T-cell (primary cell): ENCODE measurements at regions of chr10 and their contacts with region 1.

Region 1: DNA sequence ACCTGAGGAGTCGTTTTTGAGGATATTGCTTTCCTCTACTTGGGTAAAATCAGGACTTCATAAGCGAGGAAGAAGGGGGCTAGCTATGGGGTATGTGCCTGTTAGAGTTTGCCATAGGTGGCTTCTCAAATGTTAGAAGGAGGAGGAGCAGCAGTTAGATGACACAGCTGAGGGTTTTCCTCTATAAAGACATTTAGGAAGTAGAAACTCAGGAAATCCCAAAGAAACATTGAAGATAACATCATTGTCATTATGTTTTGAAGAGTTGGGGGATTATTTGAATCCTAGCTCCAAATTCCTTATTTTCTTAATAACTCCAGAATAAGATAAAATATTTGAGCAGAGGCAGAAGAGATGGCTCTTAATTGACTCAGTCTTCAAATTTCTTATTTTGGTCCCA is 58.9 kb upstream of the CC2D2B start:
- DNase-seq: no peak
- ATAC-seq: no peak
- H3K4me3 ChIP-seq: no peak overlapping the region
- H3K4me3 Mint-ChIP-seq: no peak overlapping the region
- H3K27ac ChIP-seq: no peak overlapping the region
- H3K27ac Mint-ChIP-seq: no peak overlapping the region
- H3K4me1 ChIP-seq: no peaks in the 10 kb centered on the region
- H3K4me1 Mint-ChIP-seq: no peaks in the 10 kb centered on the region
- H3K27me3 ChIP-seq: no peaks in the 10 kb centered on the region
- H3K27me3 Mint-ChIP-seq: no peaks in the 10 kb centered on the region

Region 2: DNA sequence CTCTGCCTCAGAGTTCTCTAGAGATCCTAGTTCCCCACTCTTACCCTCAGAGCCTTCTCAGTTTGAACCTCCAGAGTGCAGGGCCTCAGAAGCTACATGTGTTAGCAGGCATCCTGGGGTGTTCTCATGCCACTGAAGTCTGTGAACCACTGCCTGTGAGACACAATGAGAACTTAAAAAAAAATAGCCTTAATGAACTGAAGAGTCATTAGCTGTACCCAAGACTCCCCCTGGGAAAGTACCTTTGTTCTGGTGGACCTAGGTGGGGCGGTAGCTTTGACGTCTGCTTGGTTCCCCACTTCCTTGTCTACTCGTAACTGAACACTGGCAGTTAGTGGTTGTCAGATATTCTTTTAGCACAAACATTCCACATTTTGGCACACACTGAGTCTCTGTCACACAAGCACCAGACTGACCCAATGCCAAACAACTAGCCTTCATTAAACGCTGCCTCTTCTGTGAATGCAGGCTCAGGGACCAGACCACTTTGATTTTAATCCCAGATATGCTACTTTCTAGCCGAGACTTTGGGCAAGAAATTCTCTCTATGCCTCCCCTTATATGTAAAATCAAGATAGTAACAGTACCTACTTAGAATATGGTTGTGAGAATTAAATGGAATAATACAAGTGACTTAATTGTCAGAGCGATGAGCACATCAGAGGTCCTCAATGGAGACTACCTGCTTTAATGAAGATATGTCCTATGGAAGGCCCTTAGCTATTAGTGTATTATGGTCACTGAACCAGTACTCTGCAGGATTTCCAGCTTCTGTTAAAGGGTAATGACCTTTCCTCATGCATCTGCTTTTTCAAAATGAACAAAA is 16.4 kb before region 1 on chr10:
- CTCF ChIA-PET with region 1: no interaction called
- POLR2A ChIA-PET with region 1: no interaction called
- DNase-seq: peak in 34 of 35 experiments; percentile 5 to 85 (median 43)
- ATAC-seq: peak; percentile 27 to 95 (median 72)
- H3K4me3 ChIP-seq: no peak overlapping the region
- H3K4me3 Mint-ChIP-seq: peak overlapping the region in 1 of 3 donors; percentile 19
- H3K27ac ChIP-seq: peak overlapping the region; percentile 51
- H3K27ac Mint-ChIP-seq: peak overlapping the region; percentile 76 to 87
- H3K4me1 ChIP-seq: peaks cover 0 to 28% of the 10 kb centered on the region in 2 experiments
- H3K4me1 Mint-ChIP-seq: peaks cover 14 to 32% (median 15%) of the 10 kb centered on the region in 3 donors
- H3K27me3 ChIP-seq: no peaks in the 10 kb centered on the region
- H3K27me3 Mint-ChIP-seq: no peaks in the 10 kb centered on the region

Region 3: GRCh38 chr10:97659589-97659988 is 1810.7 kb after region 1 on chr10:
- CTCF ChIA-PET with region 1: no interaction called
- POLR2A ChIA-PET with region 1: interaction called in 1 of 2 experiments, 10 read pairs
- DNase-seq: no peak
- ATAC-seq: no peak
- H3K4me3 ChIP-seq: no peak overlapping the region
- H3K4me3 Mint-ChIP-seq: no peak overlapping the region
- H3K27ac ChIP-seq: no peak overlapping the region
- H3K27ac Mint-ChIP-seq: no peak overlapping the region
- H3K4me1 ChIP-seq: no peaks in the 10 kb centered on the region
- H3K4me1 Mint-ChIP-seq: peaks cover 0 to 3% (median 0%) of the 10 kb centered on the region in 3 donors
- H3K27me3 ChIP-seq: no peaks in the 10 kb centered on the region
- H3K27me3 Mint-ChIP-seq: no peaks in the 10 kb centered on the region